AG04450 (cell line): ENCODE measurements at regions of chr9 and their contacts with region 1.

Region 1: DNA sequence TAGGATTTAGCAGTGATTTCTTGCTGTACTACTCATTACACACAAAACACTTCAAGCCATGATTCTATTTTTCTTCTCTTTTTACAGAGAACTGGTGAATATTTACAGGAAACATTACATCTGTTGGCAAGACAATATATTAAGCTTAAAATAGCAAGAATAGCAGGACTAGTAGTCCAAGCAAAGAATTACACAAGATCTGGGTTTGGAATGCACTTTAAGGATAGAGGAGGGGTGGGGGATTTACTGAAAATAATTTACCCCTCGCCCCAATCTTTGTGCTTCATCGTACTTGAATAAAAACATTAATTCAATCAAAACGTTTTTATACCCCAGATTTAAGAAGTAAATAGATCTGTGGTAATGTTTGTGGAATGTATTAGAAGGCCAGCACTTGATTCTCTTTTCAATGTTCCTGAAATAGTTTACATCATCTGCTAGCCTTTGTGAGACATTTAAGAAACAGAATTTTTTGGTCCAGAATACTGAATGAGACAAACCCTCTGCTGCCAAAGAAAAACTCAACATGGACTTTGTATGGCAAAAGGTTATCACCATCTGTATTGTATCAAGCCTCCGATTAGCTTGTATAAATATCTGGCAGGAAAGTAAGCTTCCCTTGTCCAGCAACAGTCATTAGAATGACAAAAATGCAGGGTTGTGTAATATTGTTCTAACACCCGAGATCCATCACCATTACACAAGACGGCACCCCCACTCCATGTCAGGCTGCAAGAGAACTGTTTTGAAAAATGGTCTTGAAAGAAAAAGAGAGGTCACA is 23.8 kb downstream of the SVEP1 start:
- DNase-seq: peak; percentile 79
- H3K4me3 ChIP-seq: no peak overlapping the region
- H3K27ac ChIP-seq: peak overlapping the region; percentile 54
- H3K27me3 ChIP-seq: no peaks in the 10 kb centered on the region
- CTCF ChIP-seq: no peak

Region 2: GRCh38 chr9:110538225-110539041 is 17.3 kb before region 1 on chr9:
- CTCF ChIA-PET with region 1: no interaction called
- POLR2A ChIA-PET with region 1: interaction called, 18 read pairs
- DNase-seq: peak; percentile 30
- H3K4me3 ChIP-seq: no peak overlapping the region
- H3K27ac ChIP-seq: no peak overlapping the region
- H3K27me3 ChIP-seq: no peaks in the 10 kb centered on the region
- CTCF ChIP-seq: no peak

Region 3: GRCh38 chr9:110579034-110579861 is 23.5 kb after region 1 on chr9 and contains the start of gene SVEP1:
- CTCF ChIA-PET with region 1: no interaction called
- POLR2A ChIA-PET with region 1: interaction called, 22 read pairs
- DNase-seq: no peak
- H3K4me3 ChIP-seq: peak within 1 kb of the TSS; percentile 75
- H3K27ac ChIP-seq: peak within 1 kb of the TSS; percentile 82
- H3K27me3 ChIP-seq: no peaks in the 10 kb centered on the region
- CTCF ChIP-seq: no peak; the same call in 1 of the 2 replicates
- polyA plus RNA-seq, gene SVEP1: 34.8 and 40.9 TPM in 2 replicates